Mammary epithelial cell (primary cell): ENCODE measurements at regions of chr2 and their contacts with region 1.

Region 1: DNA sequence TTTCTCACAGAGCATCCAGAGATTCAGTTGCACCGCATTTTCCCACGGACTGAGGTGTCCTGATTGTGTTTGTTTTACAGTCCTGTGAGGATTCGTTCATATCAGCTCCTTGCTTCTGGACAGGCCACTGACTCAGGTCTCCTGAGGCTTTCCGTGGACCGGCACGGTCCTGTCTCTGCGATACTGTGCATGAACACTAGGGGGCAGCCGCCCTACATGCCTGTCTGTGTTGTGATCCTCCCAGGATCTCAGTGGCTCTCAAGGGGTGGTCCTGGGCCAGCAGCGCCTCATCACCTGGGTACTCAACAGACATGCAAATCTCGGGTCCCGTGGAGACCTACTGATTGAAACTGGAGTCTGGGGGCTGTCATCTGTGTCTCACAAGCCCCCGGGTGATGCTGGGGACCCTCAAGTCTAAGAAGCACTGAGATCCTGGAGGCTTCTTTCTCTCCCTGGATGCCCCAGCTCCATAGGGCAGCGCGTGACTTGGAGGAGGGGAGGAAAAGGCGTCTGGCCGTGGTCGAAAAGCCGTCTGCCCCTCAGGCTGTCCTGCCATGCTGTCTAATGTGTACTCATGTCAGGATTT is 28.9 kb downstream of the IL1R2 start:
- DNase-seq: peak; percentile 71
- H3K4me3 ChIP-seq: no peak overlapping the region
- H3K27ac ChIP-seq: no peak overlapping the region
- H3K4me1 ChIP-seq: peaks cover 22% of the 10 kb centered on the region
- H3K27me3 ChIP-seq: no peaks in the 10 kb centered on the region
- CTCF ChIP-seq: peak; percentile 97 to 99

Region 2: GRCh38 chr2:102082571-102083392 is 62.1 kb after region 1 on chr2:
- CTCF ChIA-PET with region 1: interaction called, 10 read pairs
- dilution Hi-C with region 1: no loop called
- in situ Hi-C with region 1: no loop called
- intact Hi-C with region 1: no loop called
- DNase-seq: peak; percentile 88
- H3K4me3 ChIP-seq: no peak overlapping the region
- H3K27ac ChIP-seq: peak overlapping the region; percentile 52
- H3K4me1 ChIP-seq: peaks cover 19% of the 10 kb centered on the region
- H3K27me3 ChIP-seq: no peaks in the 10 kb centered on the region
- CTCF ChIP-seq: no peak

Region 3: DNA sequence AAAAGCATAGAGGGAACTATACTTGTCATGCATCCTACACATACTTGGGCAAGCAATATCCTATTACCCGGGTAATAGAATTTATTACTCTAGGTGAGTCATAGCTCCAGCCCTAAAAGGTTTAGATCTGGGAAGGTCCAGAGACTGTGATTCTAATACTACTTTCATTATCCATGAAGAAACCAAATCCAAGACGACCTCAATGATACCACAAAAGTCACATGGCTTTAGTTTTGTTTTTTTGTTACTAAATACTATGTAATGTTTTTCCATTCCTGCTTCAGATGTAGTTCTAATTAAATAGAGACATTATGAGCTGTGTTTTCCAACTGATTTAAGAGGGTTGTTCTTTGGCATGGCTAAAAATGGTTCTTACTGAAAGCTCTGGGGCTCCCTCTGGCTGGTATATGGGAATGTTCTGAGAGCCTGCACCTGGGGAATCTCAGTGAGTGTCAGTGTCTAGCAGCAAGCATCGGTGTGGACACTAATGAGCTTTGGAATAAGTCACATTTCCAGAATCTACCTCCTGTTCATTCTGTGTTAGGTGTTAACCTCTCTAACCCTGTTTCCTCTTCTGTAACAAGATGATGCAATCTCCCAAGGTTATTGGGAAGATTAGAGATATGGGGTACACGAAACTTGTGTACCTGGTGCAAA is 145.6 kb after region 1 on chr2:
- CTCF ChIA-PET with region 1: interaction called, 16 read pairs
- dilution Hi-C with region 1: no loop called
- in situ Hi-C with region 1: loop called in 1 of 2 experiments (anchors 10 kb)
- intact Hi-C with region 1: loop called (anchors 1 kb)
- DNase-seq: peak; percentile 66
- H3K4me3 ChIP-seq: no peak overlapping the region
- H3K27ac ChIP-seq: peak overlapping the region; percentile 17
- H3K4me1 ChIP-seq: peaks cover 4% of the 10 kb centered on the region
- H3K27me3 ChIP-seq: no peaks in the 10 kb centered on the region
- CTCF ChIP-seq: peak; percentile 60 to 76

Region 4: GRCh38 chr2:102217032-102217431 is 196.3 kb after region 1 on chr2:
- CTCF ChIA-PET with region 1: no interaction called
- dilution Hi-C with region 1: no loop called
- in situ Hi-C with region 1: no loop called
- intact Hi-C with region 1: no loop called
- DNase-seq: no peak
- H3K4me3 ChIP-seq: no peak overlapping the region
- H3K27ac ChIP-seq: no peak overlapping the region
- H3K4me1 ChIP-seq: no peaks in the 10 kb centered on the region
- H3K27me3 ChIP-seq: no peaks in the 10 kb centered on the region
- CTCF ChIP-seq: no peak

Region 5: GRCh38 chr2:102235491-102235890 is 214.8 kb after region 1 on chr2:
- CTCF ChIA-PET with region 1: interaction called, 4 read pairs
- dilution Hi-C with region 1: no loop called
- in situ Hi-C with region 1: loop called in 1 of 2 experiments (anchors 10 kb)
- intact Hi-C with region 1: loop called (anchors 1 kb)
- DNase-seq: no peak
- H3K4me3 ChIP-seq: no peak overlapping the region
- H3K27ac ChIP-seq: no peak overlapping the region
- H3K4me1 ChIP-seq: peaks cover 2% of the 10 kb centered on the region
- H3K27me3 ChIP-seq: no peaks in the 10 kb centered on the region
- CTCF ChIP-seq: peak; percentile 50 to 54

Region 6: DNA sequence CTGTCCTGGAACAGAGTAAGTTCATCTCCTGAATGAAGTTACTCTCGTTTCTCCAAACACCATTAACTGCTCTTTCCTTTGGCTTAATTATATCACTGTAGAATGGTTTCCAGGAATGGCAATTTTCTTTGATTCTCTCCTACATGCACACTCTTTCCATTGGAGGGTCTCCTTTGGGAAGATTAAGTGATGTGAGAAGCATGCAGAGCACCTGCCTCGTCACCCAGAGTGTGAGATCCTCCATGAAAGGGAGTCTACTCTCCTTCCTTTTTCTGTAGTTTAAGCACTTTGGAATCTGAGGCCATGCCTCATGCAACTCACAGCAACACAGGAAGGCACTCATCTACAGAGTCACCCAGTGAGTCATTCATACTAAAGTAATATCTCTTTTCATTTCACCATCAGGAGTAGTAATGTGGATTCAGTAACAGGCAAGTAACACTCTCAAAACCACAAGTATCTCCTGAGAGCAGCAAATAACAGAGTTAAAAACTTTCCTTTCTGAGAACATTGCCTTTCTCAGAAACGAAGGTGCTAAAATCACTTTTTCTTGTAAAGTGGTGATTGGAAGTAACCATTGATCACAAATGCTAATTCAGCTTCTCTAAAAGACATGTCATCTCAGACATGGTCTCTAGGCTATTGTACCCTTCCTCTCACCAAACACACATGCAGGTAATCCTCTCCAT is 237.8 kb after region 1 on chr2:
- CTCF ChIA-PET with region 1: interaction called, 15 read pairs
- dilution Hi-C with region 1: no loop called
- in situ Hi-C with region 1: no loop called
- intact Hi-C with region 1: no loop called
- DNase-seq: peak; percentile 92
- H3K4me3 ChIP-seq: no peak overlapping the region
- H3K27ac ChIP-seq: peak overlapping the region; percentile 49
- H3K4me1 ChIP-seq: peaks cover 11% of the 10 kb centered on the region
- H3K27me3 ChIP-seq: no peaks in the 10 kb centered on the region
- CTCF ChIP-seq: no peak

Region 7: DNA sequence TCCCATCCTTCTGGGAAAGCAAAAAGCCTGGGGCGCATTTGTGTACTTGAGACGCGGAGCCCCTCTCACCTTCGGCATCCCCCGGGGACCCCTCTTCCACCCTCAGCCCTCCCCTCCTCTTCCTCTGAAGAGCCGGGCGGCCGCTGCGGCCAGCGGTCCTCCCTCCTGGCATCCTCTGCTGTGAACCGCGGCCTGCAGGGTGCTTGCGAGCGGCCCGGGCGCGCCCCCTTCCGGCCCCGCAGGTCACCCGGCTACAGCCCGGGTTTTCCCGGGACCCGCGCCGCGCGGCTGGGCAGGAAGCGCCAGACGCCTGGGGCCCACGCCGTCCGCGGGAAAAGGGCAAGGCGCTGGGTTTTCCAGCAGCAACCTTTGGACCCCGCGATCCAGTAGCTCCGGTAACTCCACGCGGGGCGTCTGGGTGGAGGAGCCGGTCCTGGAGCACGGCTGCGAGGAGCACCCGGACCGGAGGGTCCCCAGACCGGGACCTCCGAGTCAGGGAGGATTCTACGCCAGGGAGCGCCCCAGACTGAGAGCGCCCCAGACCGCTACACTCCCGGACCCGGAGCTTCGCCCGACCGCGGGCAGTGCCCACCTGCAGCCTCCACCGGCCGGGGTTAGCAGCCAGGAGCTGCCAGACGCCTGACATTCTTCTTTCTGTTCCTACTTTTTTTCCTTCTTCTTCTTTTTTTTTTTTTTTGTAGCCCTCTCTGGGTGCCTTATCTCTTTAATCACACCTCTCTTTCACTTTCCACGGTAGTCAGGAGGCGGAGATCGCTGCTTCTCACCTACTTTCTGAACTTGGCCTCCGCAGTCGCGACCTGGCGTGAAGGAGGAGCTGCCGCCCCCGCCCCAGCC is 335.1 kb after region 1 on chr2 and contains the start of gene IL18R1:
- CTCF ChIA-PET with region 1: no interaction called
- dilution Hi-C with region 1: no loop called
- in situ Hi-C with region 1: loop called (anchors 10 kb)
- intact Hi-C with region 1: loop called (anchors 2 kb)
- DNase-seq: peak; percentile 65
- H3K4me3 ChIP-seq: peak within 1 kb of the TSS; percentile 84 to 88 (median 85)
- H3K27ac ChIP-seq: peak within 1 kb of the TSS; percentile 58
- H3K4me1 ChIP-seq: peaks cover 8% of the 10 kb centered on the region
- H3K27me3 ChIP-seq: no peaks in the 10 kb centered on the region
- CTCF ChIP-seq: peak; percentile 55 to 85
- total RNA-seq, gene IL18R1: 1.2 to 3.9 TPM

Region 8: DNA sequence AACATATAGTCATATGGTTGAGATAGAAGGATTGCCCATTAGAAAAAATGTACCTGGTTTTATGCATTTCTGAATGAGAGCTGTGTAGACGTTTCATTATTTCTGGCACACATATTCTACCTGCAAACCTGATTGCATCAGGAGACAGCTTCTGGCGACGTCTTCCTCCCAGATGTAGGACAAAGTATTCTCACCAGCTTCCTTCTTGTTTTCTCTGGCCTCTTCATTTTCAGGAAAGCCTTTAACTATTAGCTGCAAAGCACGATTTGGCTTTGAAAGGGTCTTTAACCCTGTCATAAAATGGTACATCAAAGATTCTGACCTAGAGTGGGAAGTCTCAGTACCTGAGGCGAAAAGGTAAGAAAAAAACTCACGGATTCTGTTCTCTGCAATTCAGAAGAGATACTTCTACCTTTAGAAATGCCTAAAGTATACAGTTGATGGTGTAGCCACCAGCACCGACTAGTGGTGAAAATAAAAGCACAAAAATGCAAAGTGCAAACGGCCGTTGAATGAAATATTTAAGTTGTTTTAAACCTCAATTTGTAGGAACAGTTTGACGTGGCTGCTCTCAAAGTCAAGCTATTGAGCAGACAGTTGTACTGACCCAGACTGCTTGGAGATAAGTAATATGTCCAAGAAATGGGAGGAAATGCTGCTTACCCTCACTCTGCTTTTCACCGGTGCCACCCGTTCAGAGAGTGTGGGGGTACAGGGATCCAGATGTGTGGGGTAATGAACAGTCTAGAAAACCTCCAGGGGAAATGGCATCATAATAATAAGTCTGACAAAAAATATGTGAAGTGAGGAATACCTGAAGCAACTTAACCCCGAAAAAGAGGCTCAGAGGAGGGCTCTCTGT is 422.5 kb after region 1 on chr2:
- CTCF ChIA-PET with region 1: interaction called, 9 read pairs
- dilution Hi-C with region 1: no loop called
- in situ Hi-C with region 1: loop called (anchors 10 kb)
- intact Hi-C with region 1: loop called (anchors 2 kb)
- DNase-seq: peak; percentile 35
- H3K4me3 ChIP-seq: no peak overlapping the region
- H3K27ac ChIP-seq: no peak overlapping the region
- H3K4me1 ChIP-seq: peaks cover 11% of the 10 kb centered on the region
- H3K27me3 ChIP-seq: no peaks in the 10 kb centered on the region
- CTCF ChIP-seq: peak; percentile 72 to 78

Region 9: GRCh38 chr2:102703748-102704147 is 683.1 kb after region 1 on chr2:
- CTCF ChIA-PET with region 1: no interaction called
- dilution Hi-C with region 1: no loop called
- in situ Hi-C with region 1: no loop called
- intact Hi-C with region 1: no loop called
- DNase-seq: peak; percentile 50
- H3K4me3 ChIP-seq: no peak overlapping the region
- H3K27ac ChIP-seq: no peak overlapping the region
- H3K4me1 ChIP-seq: peaks cover under 1% of the 10 kb centered on the region
- H3K27me3 ChIP-seq: no peaks in the 10 kb centered on the region
- CTCF ChIP-seq: peak; percentile 55 to 70